BJ (cell line): ENCODE measurements at regions of chr2 and their contacts with region 1.

Region 1: DNA sequence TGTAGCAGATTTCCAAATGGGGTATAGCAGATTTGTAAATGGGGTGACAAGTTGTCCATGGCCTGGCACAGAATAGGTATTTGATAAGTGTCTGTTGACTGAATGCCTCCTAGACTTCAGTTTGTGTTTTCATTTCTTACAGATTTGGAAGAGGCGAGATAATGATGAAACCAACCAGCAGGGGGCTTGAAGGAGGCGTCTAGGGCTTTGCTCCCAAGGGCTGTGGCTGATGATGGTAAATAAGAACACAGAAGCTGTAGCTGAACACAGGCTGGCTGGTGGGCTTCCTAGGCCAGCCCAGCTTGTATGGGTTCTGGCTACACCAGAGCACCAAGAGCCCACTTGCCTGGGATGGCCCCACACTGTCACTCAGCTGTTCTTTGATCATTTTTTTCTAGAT is 19.4 kb downstream of the SFTPB start:
- DNase-seq: no peak
- H3K4me3 ChIP-seq: no peak overlapping the region
- H3K27me3 ChIP-seq: no peaks in the 10 kb centered on the region
- CTCF ChIP-seq: peak; percentile 68

Region 2: GRCh38 chr2:85619617-85620016 is 29.0 kb before region 1 on chr2:
- CTCF ChIA-PET with region 1: interaction called, 10 read pairs
- POLR2A ChIA-PET with region 1: no interaction called
- DNase-seq: no peak
- H3K4me3 ChIP-seq: no peak overlapping the region
- H3K27me3 ChIP-seq: no peaks in the 10 kb centered on the region
- CTCF ChIP-seq: no peak

Region 3: GRCh38 chr2:85678794-85679672 is 30.4 kb after region 1 on chr2:
- CTCF ChIA-PET with region 1: interaction called, 17 read pairs
- POLR2A ChIA-PET with region 1: no interaction called
- DNase-seq: no peak
- H3K4me3 ChIP-seq: no peak overlapping the region
- H3K27me3 ChIP-seq: no peaks in the 10 kb centered on the region
- CTCF ChIP-seq: peak; percentile 99

Region 4: DNA sequence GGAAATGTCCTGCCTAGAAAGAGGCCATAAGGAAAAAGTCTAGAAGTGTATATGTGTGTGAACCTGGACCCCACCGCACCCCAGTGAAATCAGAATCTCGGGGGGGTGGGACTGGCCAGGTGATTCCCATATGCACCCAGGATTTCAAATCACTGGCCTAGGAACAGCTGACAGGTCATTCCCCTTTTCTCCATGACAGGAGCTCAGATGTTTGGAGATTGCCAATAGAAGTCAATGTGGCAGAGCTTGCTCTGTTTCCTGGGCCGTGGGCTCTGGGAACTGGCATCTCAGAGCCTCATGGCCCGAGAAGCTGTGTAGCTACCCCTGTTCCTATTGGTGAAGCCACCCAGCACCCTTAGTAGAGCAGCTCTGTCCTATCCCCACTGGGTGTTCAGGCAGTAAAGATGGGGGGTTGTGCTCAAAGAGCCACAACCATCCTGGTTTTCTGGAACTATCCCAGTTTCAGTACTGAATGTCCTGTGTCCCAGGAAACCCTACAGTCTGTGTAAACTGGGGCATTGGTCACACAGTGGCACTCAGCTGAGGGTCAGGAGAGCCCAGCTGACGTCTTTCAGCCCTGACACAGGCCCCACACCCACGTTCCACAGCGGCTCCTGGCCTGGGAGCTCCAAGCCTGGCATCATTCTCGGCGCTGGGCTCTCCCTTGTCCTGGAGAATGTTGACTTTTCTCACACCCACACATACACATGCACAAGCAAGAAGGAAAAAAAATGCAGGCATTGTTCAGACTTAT is 64.4 kb after region 1 on chr2:
- CTCF ChIA-PET with region 1: interaction called, 81 read pairs
- POLR2A ChIA-PET with region 1: no interaction called
- DNase-seq: no peak
- H3K4me3 ChIP-seq: no peak overlapping the region
- H3K27me3 ChIP-seq: no peaks in the 10 kb centered on the region; the same call in 1 of the 2 replicates
- CTCF ChIP-seq: no peak

Region 5: DNA sequence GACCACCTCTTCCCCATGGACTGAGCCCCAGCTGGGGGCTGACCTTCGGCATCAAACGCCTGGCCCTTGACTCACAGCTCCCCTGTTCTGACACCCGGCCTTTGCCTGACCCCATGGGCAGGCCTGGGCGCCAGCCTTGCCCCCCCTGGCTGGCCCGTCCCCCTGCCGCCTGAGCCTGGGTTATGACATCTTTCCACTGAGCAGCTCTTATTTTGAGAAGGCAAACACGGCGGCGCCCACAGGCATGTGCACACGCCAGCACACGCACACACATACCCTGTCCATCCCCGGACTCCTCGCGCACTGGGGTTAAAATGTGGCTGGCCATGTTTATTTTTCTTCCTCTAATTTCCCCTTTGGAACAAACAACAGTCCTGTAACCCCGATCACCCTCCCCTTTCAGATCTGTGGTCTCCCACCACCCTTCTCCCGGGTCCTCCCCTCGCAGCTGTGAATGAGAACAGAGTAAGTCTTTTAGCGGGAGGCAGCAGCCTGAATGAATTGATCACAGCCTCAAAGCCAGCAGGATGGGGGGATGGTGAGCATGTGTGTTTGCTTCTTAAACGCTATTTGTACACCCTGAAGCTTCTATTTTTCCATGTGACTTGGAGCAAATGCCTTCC is 93.3 kb after region 1 on chr2:
- CTCF ChIA-PET with region 1: interaction called, 11 read pairs
- POLR2A ChIA-PET with region 1: no interaction called
- DNase-seq: no peak
- H3K4me3 ChIP-seq: no peak overlapping the region; the same call in 1 of the 2 replicates
- H3K27me3 ChIP-seq: no peaks in the 10 kb centered on the region
- CTCF ChIP-seq: peak; percentile 13; the same call in 1 of the 2 replicates